A549 (cell line): ENCODE measurements at regions of chr7 and their contacts with region 1.

Region 1: GRCh38 chr7:142535123-142535779 is 214.0 kb upstream of the PRSS1 start:
- DNase-seq: peak; percentile 68 to 76
- ATAC-seq: peak; percentile 97 to 100
- H3K4me3 ChIP-seq: no peak overlapping the region
- H3K27ac ChIP-seq: peak overlapping the region in 1 of 2 experiments; percentile 50; a peak in 2 of 6 replicates
- H3K4me1 ChIP-seq: peaks cover 14% of the 10 kb centered on the region; the same call in 2 of the 3 replicates
- CTCF ChIP-seq: peak; percentile 94
- EP300 ChIP-seq: no peak
- POLR2A ChIP-seq: no peak
- RAD21 ChIP-seq: peak; percentile 93 to 99

Region 2: DNA sequence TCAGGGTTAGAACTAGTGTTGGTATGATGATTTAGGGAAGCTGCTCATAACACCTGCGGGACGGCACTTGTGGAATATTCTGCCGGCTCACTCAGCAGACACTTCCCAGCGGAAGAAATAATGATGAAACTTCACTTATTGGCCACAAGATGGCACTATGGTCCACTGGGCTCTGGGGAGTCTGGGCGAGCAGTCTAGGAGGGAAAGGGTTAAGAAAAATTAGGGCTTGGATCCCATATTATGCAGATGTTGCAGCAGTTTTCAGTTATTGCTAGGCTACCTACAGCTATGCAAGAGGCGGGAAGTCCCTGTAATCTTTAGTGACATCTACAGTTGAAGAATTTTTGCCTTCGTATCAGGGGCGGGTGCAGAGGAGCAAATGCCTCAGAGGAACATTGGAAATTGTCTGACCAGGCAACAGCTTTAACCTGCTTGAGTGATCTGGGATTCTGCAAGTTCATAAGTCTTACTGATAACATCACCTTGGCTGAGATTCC is 38.7 kb before region 1 on chr7:
- CTCF ChIA-PET with region 1: interaction called, 13 read pairs
- POLR2A ChIA-PET with region 1: no interaction called
- DNase-seq: peak in 1 of 2 experiments; percentile 39
- ATAC-seq: peak; percentile 75 to 88; a peak in 4 of 6 replicates
- H3K4me3 ChIP-seq: no peak overlapping the region
- H3K27ac ChIP-seq: no peak overlapping the region
- H3K4me1 ChIP-seq: no peaks in the 10 kb centered on the region
- CTCF ChIP-seq: peak; percentile 60
- EP300 ChIP-seq: no peak
- POLR2A ChIP-seq: no peak
- RAD21 ChIP-seq: peak; percentile 39 to 54; a peak in 4 of 5 replicates

Region 3: DNA sequence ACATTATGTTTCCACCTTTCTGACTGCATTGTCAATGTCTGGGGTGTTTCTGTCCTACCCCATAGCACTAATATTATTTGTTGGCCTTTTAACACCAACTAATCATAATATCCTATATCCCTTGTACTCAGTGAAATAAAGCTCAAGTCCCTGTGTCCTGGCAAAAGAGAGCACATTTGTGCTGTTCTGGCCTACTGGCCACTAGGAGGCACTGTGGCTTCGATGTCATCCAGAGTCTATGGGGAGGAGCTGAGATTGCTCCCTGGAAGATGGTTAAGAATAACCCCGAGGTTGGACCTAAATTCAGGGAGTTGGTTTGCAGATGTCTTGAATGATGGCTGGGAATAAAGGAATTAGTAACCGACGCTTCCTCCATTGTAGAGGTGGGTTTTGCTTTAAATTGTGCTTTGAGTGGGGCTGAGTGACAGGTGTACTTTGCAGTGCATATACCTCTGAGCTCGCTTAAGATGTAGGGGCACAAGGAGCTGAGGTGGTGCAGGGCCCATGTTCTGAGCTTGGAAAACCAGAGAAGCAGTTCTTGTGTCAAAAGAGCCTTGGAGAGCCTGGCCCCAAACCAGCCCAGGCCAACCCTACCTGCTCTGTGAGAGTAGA is 22.8 kb after region 1 on chr7:
- CTCF ChIA-PET with region 1: interaction called, 25 read pairs
- POLR2A ChIA-PET with region 1: no interaction called
- DNase-seq: peak; percentile 35 to 72
- ATAC-seq: peak; percentile 26 to 77; a peak in 3 of 6 replicates
- H3K4me3 ChIP-seq: no peak overlapping the region
- H3K27ac ChIP-seq: peak overlapping the region; percentile 66 to 83
- H3K4me1 ChIP-seq: peaks cover 24% of the 10 kb centered on the region
- CTCF ChIP-seq: peak; percentile 47
- EP300 ChIP-seq: no peak
- POLR2A ChIP-seq: no peak
- RAD21 ChIP-seq: peak in 1 of 2 experiments; percentile 38; a peak in 2 of 5 replicates

Region 4: GRCh38 chr7:142598297-142598696 is 63.0 kb after region 1 on chr7:
- CTCF ChIA-PET with region 1: interaction called, 56 read pairs
- POLR2A ChIA-PET with region 1: no interaction called
- DNase-seq: no peak
- ATAC-seq: no peak
- H3K4me3 ChIP-seq: no peak overlapping the region
- H3K27ac ChIP-seq: no peak overlapping the region
- H3K4me1 ChIP-seq: no peaks in the 10 kb centered on the region
- CTCF ChIP-seq: no peak
- EP300 ChIP-seq: no peak
- POLR2A ChIP-seq: no peak
- RAD21 ChIP-seq: no peak

Region 5: DNA sequence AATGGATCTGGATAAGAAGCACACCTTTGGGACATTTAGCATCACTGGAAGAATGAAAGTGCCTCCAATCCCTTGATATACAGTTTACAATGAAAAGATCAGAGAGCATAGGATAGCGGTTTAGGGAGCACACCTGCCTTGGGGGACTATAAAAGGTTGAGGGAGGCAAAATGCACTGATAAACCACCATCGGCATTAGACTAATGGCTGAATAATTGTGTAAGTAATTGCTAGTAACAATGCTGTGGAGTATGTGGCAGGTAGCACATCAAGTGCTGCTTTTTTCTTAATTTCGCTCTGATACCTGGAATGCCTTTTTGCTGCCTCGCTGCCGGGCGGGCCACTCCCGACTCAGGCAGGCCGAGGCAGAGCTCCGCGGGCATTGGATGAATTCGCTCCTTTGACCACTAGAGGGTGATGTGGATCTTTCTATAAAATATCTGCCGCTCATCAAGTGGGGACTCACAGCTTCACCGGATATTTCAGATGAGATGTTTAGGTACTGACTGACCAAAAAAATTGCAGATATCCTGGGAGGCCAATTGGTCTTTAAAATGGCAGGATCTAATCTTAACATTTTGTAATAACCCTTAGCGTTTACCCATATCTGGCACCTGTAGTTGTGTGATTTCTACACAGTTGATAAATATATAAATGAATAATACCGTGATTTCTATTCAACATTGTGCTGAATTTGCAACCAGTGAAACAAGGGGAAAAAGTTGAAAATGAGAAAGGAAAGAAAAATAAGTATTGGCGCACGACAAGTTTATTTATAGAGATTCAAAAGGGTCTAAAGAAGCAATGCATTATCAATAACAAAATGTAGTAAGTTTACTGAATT is 97.3 kb after region 1 on chr7:
- CTCF ChIA-PET with region 1: interaction called, 41 read pairs
- POLR2A ChIA-PET with region 1: no interaction called
- DNase-seq: peak; percentile 65 to 71
- ATAC-seq: peak; percentile 89 to 97
- H3K4me3 ChIP-seq: no peak overlapping the region
- H3K27ac ChIP-seq: no peak overlapping the region
- H3K4me1 ChIP-seq: no peaks in the 10 kb centered on the region
- CTCF ChIP-seq: peak; percentile 81
- EP300 ChIP-seq: no peak
- POLR2A ChIP-seq: no peak
- RAD21 ChIP-seq: peak; percentile 70 to 77

Region 6: GRCh38 chr7:142811154-142811737 is 276.0 kb after region 1 on chr7:
- CTCF ChIA-PET with region 1: interaction called, 17 read pairs
- POLR2A ChIA-PET with region 1: no interaction called
- DNase-seq: peak; percentile 50 to 51
- ATAC-seq: peak; percentile 31 to 90; a peak in 3 of 6 replicates
- H3K4me3 ChIP-seq: no peak overlapping the region
- H3K27ac ChIP-seq: no peak overlapping the region
- H3K4me1 ChIP-seq: no peaks in the 10 kb centered on the region
- CTCF ChIP-seq: peak; percentile 67
- EP300 ChIP-seq: no peak
- POLR2A ChIP-seq: no peak
- RAD21 ChIP-seq: peak; percentile 60 to 61

Region 7: DNA sequence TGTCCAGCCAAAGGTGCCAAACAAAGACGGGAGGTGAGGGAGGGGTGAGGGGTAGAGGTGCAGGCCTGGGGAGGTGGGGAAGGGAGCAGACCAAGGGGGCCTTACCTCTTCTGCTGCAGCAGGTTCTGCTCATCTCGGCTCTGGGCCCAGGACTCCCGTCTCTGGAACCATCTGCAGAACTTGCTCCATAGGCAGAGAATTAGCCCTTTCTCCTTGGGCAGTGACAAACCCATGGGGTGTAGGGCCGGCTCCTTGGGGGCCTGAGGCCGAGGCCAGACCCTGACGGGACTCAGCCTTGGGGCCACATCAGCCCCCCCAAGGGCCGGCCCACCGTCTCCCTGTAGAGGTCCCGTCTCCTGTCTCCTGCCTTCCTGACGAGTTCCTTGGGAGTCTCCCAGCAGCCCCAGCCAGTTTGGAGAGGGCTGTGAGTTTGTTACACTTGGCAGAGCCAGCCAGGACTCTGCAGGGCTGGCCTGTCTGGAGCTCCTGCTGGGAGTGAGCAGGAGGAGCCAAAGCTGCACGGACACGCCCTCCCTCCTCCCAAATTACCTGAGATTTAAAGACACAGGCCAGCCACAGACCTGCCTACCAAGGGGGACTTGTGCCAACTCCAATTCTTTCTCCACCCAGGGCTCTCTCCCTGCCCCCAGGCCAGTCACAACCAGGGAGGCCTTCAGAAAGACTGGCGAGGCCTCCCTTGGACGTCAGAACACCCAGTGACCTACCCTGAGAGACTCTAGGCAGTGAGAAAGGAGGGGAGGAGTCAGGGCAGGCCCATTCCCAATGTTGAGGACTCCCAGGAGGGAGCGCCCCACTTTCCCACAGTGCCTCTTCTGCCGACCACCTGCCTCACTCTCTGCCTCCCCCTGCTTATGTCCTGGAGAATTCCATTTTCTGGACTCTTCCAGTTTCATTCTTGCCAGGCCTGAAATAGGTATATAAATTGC is 350.3 kb after region 1 on chr7 and contains the start of gene TRPV6:
- CTCF ChIA-PET with region 1: no interaction called
- POLR2A ChIA-PET with region 1: no interaction called
- DNase-seq: no peak
- ATAC-seq: peak in 1 of 2 experiments; percentile 36; a peak in 2 of 6 replicates
- H3K4me3 ChIP-seq: no peak within 1 kb of the TSS
- H3K27ac ChIP-seq: no peak within 1 kb of the TSS
- H3K4me1 ChIP-seq: no peaks in the 10 kb centered on the region
- CTCF ChIP-seq: no peak
- EP300 ChIP-seq: no peak
- POLR2A ChIP-seq: no peak
- RAD21 ChIP-seq: no peak
- polyA plus RNA-seq, gene TRPV6: 0.04 TPM in 1 of 2 replicates, not detected in the other